ENCODE measurements at regions of chr9 and their contacts with region 1.

Region 1: GRCh38 chr9:35748858-35749514 is at the starts of genes GBA2 and RGP1:
- DNase-seq: peak; percentile 50 to 71 (median 62)
- H3K4me3 ChIP-seq: peak within 1 kb of the TSS; percentile 89 to 92
- H3K4me3 Mint-ChIP-seq: peak within 1 kb of the TSS; percentile 92 to 97 (median 94)
- H3K27ac ChIP-seq: peak within 1 kb of the TSS; percentile 82
- H3K27ac Mint-ChIP-seq: peak within 1 kb of the TSS; percentile 87 to 97 (median 96)
- H3K4me1 ChIP-seq: peaks cover 45% of the 10 kb centered on the region
- H3K4me1 Mint-ChIP-seq: peaks cover 37 to 73% (median 51%) of the 10 kb centered on the region in 4 donors
- H3K27me3 ChIP-seq: no peaks in the 10 kb centered on the region
- H3K27me3 Mint-ChIP-seq: no peaks in the 10 kb centered on the region
- total RNA-seq, gene GBA2: 61.1 to 66.3 TPM
- total RNA-seq, gene RGP1: 31.8 to 33.8 TPM

Region 2: GRCh38 chr9:35111001-35111933 is 637.7 kb before region 1 on chr9:
- CTCF ChIA-PET with region 1: no interaction called
- POLR2A ChIA-PET with region 1: interaction called, 3 read pairs
- intact Hi-C with region 1: loop called (anchors 5 kb)
- DNase-seq: peak; percentile 91 to 98 (median 94)
- H3K4me3 ChIP-seq: peak overlapping the region; percentile 47 to 54
- H3K4me3 Mint-ChIP-seq: peak overlapping the region; percentile 67 to 94 (median 81)
- H3K27ac ChIP-seq: peak overlapping the region; percentile 82
- H3K27ac Mint-ChIP-seq: peak overlapping the region; percentile 88 to 96 (median 91)
- H3K4me1 ChIP-seq: peaks cover 52% of the 10 kb centered on the region
- H3K4me1 Mint-ChIP-seq: peaks cover 41 to 63% (median 47%) of the 10 kb centered on the region in 4 donors
- H3K27me3 ChIP-seq: no peaks in the 10 kb centered on the region
- H3K27me3 Mint-ChIP-seq: no peaks in the 10 kb centered on the region

Region 3: GRCh38 chr9:35518981-35519679 is 229.9 kb before region 1 on chr9:
- CTCF ChIA-PET with region 1: no interaction called
- POLR2A ChIA-PET with region 1: no interaction called
- intact Hi-C with region 1: no loop called
- DNase-seq: no peak
- H3K4me3 ChIP-seq: no peak overlapping the region
- H3K4me3 Mint-ChIP-seq: no peak overlapping the region
- H3K27ac ChIP-seq: no peak overlapping the region
- H3K27ac Mint-ChIP-seq: peak overlapping the region in 1 of 7 donors; percentile 30
- H3K4me1 ChIP-seq: no peaks in the 10 kb centered on the region
- H3K4me1 Mint-ChIP-seq: no peaks in the 10 kb centered on the region
- H3K27me3 ChIP-seq: peaks cover 2% of the 10 kb centered on the region
- H3K27me3 Mint-ChIP-seq: peaks cover 0 to 1% of the 10 kb centered on the region in 2 donors

Region 4: DNA sequence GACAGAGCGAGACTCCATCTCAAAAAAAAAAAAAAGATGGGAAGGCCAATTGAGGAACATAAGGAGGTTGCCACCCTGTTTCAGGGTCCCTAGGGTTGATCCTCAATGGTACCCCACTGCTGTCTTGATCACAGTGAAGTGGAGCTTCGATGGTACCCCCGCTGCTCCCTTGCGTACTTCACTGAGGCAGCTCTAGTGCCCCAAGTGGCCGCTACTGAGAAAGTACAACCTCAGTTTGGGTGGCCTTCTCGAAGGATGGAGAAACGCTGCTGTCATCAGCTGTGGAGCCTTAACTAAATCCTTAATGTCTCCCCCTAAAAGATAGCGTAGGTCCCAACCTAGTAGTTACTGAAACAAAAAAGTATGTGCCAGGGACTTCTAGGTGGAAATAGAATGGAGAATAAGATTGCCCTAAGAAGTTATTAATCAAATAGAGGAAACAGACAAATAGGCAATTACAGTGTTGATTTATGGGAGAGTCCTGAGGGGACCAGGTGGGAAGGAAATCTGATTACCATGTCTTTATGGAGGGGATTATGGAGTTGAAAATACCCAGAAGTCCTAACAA is 137.7 kb before region 1 on chr9:
- CTCF ChIA-PET with region 1: interaction called, 25 read pairs
- POLR2A ChIA-PET with region 1: interaction called, 11 read pairs
- intact Hi-C with region 1: no loop called
- DNase-seq: peak; percentile 45 to 63 (median 49)
- H3K4me3 ChIP-seq: no peak overlapping the region
- H3K4me3 Mint-ChIP-seq: peak overlapping the region in 1 of 8 donors; percentile 26
- H3K27ac ChIP-seq: no peak overlapping the region
- H3K27ac Mint-ChIP-seq: peak overlapping the region in 5 of 7 donors; percentile 4 to 83 (median 59)
- H3K4me1 ChIP-seq: peaks cover 19% of the 10 kb centered on the region
- H3K4me1 Mint-ChIP-seq: peaks cover 13 to 43% (median 20%) of the 10 kb centered on the region in 4 donors
- H3K27me3 ChIP-seq: no peaks in the 10 kb centered on the region
- H3K27me3 Mint-ChIP-seq: no peaks in the 10 kb centered on the region

Region 5: GRCh38 chr9:35616681-35617459 is 132.1 kb before region 1 on chr9:
- CTCF ChIA-PET with region 1: interaction called, 25 read pairs
- POLR2A ChIA-PET with region 1: interaction called, 11 read pairs
- intact Hi-C with region 1: no loop called
- DNase-seq: peak; percentile 63 to 75 (median 64)
- H3K4me3 ChIP-seq: peak overlapping the region; percentile 63 to 64
- H3K4me3 Mint-ChIP-seq: peak overlapping the region; percentile 84 to 91 (median 88)
- H3K27ac ChIP-seq: peak overlapping the region; percentile 60
- H3K27ac Mint-ChIP-seq: peak overlapping the region; percentile 89 to 95 (median 93)
- H3K4me1 ChIP-seq: peaks cover 36% of the 10 kb centered on the region
- H3K4me1 Mint-ChIP-seq: peaks cover 26 to 58% (median 35%) of the 10 kb centered on the region in 4 donors
- H3K27me3 ChIP-seq: no peaks in the 10 kb centered on the region
- H3K27me3 Mint-ChIP-seq: no peaks in the 10 kb centered on the region

Region 6: GRCh38 chr9:35774907-35775635 is 26.1 kb after region 1 on chr9:
- CTCF ChIA-PET with region 1: no interaction called
- POLR2A ChIA-PET with region 1: no interaction called
- intact Hi-C with region 1: no loop called
- DNase-seq: no peak
- H3K4me3 ChIP-seq: no peak overlapping the region
- H3K4me3 Mint-ChIP-seq: peak overlapping the region in 1 of 8 donors; percentile 18
- H3K27ac ChIP-seq: no peak overlapping the region
- H3K27ac Mint-ChIP-seq: peak overlapping the region in 3 of 7 donors; percentile 62 to 72 (median 69)
- H3K4me1 ChIP-seq: peaks cover 3% of the 10 kb centered on the region
- H3K4me1 Mint-ChIP-seq: peaks cover 0 to 5% (median 3%) of the 10 kb centered on the region in 4 donors
- H3K27me3 ChIP-seq: no peaks in the 10 kb centered on the region
- H3K27me3 Mint-ChIP-seq: no peaks in the 10 kb centered on the region